OCI-LY7 (cell line): ENCODE measurements at regions of chr22 and their contacts with region 1.

Region 1: GRCh38 chr22:28741758-28742561 is at the starts of genes CHEK2 and HSCB:
- DNase-seq: peak; percentile 99
- H3K4me3 ChIP-seq: peak within 1 kb of the TSS; percentile 78
- H3K27ac ChIP-seq: peak within 1 kb of the TSS; percentile 83
- H3K4me1 ChIP-seq: peaks cover 21% of the 10 kb centered on the region
- CTCF ChIP-seq: peak; percentile 65
- total RNA-seq, gene CHEK2: 49.3 and 53.3 TPM in 2 replicates
- total RNA-seq, gene HSCB: 16.6 and 23.4 TPM in 2 replicates

Region 2: DNA sequence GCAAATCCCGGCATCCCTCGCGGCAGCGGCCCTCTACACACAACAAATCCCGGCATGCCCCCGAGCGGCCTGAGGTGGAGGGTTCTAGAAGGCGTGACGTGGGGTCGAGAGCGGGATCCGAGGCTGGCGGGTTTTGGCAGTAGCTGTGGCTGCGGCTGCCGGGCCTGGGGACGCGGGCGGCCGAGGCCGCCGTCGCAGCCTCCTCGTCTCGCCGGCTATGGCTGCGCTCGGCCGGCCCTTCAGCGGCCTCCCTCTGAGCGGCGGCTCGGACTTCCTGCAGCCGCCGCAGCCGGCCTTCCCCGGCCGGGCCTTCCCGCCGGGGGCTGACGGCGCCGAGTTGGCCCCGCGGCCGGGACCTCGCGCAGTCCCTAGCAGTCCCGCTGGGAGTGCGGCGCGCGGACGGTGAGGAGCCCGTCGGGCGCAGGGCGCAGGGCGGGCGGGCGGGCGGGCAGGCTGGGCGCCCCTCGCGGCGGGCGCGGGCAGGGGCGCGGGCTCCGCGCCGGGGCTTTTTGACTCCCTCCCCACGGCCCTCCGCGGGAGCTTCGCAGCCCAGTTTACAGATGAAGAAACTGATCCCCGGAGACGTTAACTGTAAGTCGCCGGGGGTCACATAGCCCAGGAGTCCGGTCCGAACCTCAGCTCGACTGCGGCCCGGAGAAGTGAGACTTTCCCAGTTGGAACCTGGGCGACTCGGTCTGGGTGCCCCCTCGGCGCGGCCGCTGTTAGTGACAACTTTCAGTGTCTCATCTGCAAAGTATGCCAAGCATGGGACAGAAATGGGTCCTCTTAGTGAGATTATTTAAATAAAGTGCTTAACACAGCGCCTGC is 30.9 kb after region 1 on chr22 and contains the start of gene CCDC117:
- CTCF ChIA-PET with region 1: no interaction called
- POLR2A ChIA-PET with region 1: no interaction called
- intact Hi-C with region 1: loop called (anchors 1 kb)
- DNase-seq: peak; percentile 95
- H3K4me3 ChIP-seq: peak within 1 kb of the TSS; percentile 90
- H3K27ac ChIP-seq: peak within 1 kb of the TSS; percentile 68
- H3K4me1 ChIP-seq: peaks cover 5% of the 10 kb centered on the region
- CTCF ChIP-seq: 0 out of 2 replicates have a peak, but pooled peaks have one; percentile 28
- total RNA-seq, gene CCDC117: 19.5 and 21.4 TPM in 2 replicates

Region 3: DNA sequence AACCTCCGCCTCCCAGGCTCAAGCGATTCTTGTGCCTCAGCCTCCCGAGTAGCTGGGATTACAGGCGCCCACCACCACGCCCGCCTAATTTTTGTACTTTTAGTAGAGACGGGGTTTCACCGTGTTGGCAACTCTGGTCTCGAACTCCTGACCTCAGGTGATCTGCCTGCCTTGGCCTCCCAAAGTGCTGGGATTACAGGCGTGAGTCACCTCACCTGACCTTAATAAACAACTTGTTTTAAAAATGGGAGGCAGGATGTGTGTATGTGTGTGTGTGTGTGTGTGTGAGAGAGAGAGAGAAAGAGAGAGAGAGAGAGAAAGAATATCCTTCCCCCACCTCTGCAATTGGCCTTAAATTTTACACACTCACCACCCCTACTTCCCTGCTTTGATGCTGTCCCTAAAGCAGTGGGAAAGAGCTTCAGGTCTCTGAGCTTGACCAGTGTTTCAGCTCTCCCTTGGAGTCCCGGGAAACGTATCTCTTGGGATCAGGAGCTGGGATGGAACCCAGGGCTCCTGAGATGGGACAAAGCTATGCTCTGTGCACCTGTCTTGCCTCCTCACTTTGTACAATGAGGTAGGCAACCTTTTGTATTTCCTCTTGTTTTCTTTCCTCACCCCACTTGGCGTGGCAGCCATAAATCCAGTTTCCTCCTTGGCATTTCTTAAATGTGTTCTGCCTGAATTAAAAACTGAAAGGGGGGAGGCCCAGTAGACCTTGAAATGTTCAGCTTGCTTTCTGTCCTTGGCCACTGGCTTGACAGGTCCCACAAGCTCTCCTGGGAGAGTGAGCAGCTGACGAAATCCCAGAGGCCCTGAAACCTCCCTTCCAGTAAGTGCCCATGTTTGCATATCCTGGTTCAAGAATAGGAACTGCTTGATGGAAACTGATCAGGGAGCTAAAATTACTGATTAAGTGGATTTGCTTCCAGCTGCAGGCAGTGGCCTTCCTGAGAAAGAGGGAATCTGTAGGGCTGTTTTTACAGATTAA is 76.3 kb after region 1 on chr22:
- CTCF ChIA-PET with region 1: no interaction called
- POLR2A ChIA-PET with region 1: no interaction called
- intact Hi-C with region 1: loop called (anchors 2 kb)
- DNase-seq: peak; percentile 46
- H3K4me3 ChIP-seq: no peak overlapping the region
- H3K27ac ChIP-seq: peak overlapping the region; percentile 7
- H3K4me1 ChIP-seq: peaks cover 46% of the 10 kb centered on the region
- CTCF ChIP-seq: no peak

Region 4: DNA sequence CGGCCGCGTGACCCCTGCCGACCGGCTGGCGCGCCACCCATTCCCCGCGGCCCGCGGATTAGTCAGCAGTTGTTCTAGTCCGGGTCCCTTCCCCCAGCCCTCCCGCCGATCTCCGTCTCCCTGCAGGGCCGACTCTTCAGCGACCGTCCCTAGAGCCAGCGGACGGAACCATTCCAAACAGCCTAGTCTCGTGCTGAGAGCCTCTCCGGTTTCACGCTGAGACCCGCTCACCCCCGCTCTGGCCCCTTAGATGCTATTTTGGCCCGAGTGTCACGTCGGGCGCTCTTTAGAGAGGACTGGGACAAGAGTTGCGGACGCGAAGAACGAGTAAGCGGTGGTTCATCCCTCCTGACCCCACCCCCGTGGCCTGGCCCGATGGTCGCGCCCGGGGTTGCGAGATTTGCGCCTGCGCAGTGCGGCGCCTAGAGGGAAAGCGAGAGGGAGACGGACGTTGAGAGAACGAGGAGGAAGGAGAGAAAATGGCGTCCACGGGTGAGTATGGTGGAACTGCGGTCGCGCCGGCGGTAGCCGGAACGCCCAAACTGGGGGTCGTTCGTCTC is 526.0 kb after region 1 on chr22 and contains the starts of genes EWSR1 and RHBDD3:
- CTCF ChIA-PET with region 1: no interaction called
- POLR2A ChIA-PET with region 1: interaction called, 3 read pairs
- intact Hi-C with region 1: loop called (anchors 10 kb)
- DNase-seq: peak; percentile 97
- H3K4me3 ChIP-seq: peak within 1 kb of the TSS; percentile 92
- H3K27ac ChIP-seq: peak within 1 kb of the TSS; percentile 75
- H3K4me1 ChIP-seq: peaks cover 34% of the 10 kb centered on the region
- CTCF ChIP-seq: no peak
- total RNA-seq, gene EWSR1: 270 and 311 TPM in 2 replicates
- total RNA-seq, gene RHBDD3: 37.9 and 44.5 TPM in 2 replicates